Gastrocnemius medialis (tissue), 4 donors: ENCODE measurements at regions of chr7 and their contacts with region 1.

Region 1: DNA sequence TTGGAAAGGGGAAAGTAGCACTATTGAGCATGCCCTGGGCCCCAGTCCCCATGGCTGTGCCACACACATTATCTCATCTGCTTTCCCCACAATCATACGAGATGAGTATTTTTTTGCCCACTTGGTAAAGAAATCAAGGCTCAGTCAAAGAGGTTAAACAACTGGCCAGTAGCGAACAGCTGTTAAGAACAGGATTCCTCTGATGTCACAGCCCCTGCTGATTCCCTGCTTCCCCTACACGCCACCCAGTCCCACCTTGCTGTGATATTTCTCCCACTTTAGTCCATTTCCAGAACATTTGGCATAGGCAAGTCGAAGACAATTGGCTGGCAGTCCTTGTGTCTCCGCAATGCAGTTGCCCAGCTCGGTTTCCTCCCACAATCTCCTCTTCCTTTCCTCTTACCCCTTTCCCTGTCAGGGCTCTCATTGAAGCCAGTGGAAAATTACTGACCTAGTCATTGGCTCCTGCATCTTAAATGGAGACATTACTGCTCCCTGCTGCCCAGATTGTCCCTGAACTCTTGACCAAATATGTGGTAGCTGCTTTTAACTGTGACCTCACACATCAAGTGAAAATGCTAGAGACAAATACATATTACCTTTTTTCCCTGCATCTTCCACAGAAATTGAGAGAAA is 56.5 kb upstream of the EEPD1 start:
- DNase-seq: peak; percentile 41 to 42
- ATAC-seq: peak; percentile 89 to 96
- H3K4me3 ChIP-seq: no peak overlapping the region
- H3K27ac ChIP-seq: peak overlapping the region; percentile 30 to 75 (median 60)
- H3K4me1 ChIP-seq: peaks cover 6 to 20% of the 10 kb centered on the region in 2 donors
- H3K27me3 ChIP-seq: no peaks in the 10 kb centered on the region
- CTCF ChIP-seq: peak in 2 of 5 experiments; percentile 17 to 18
- POLR2A ChIP-seq: no peak

Region 2: DNA sequence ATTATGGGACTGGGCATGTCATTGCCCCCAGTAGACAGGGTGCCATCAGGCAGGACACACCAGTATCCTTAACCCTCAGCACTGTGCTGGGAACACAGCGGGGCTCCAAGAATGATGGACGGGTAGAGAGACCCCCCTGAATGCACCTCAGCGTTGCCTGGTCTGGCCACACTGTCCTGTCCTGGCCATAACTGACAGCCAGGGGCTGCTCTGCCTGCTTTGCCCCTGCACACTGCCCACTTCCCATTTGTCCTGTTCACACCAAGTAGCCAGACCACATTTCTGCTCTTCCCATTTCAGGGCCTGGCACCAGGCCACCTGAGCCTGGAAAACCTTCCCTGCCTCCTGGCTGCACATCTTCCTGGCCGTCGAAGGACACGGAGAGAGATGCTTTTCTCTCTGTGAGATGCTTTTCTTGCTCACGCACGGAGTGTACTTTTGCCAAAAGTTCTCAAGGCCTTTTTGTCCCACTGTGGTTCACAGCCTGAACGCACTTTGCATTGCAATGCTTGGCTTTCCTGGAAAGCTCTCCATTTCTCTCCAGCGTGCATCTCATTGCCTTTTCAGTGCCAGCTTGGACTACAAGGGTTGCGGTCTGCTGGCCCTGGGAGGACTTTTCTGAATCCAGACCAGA is 74.5 kb before region 1 on chr7:
- in situ Hi-C with region 1: no loop called
- intact Hi-C with region 1: loop called (anchors 2 kb)
- DNase-seq: peak in 1 of 2 donors; percentile 28
- ATAC-seq: peak; percentile 40 to 45
- H3K4me3 ChIP-seq: no peak overlapping the region
- H3K27ac ChIP-seq: peak overlapping the region in 1 of 4 donors; percentile 32
- H3K4me1 ChIP-seq: peaks cover 8 to 10% of the 10 kb centered on the region in 2 donors
- H3K27me3 ChIP-seq: no peaks in the 10 kb centered on the region
- CTCF ChIP-seq: no peak
- POLR2A ChIP-seq: no peak

Region 3: DNA sequence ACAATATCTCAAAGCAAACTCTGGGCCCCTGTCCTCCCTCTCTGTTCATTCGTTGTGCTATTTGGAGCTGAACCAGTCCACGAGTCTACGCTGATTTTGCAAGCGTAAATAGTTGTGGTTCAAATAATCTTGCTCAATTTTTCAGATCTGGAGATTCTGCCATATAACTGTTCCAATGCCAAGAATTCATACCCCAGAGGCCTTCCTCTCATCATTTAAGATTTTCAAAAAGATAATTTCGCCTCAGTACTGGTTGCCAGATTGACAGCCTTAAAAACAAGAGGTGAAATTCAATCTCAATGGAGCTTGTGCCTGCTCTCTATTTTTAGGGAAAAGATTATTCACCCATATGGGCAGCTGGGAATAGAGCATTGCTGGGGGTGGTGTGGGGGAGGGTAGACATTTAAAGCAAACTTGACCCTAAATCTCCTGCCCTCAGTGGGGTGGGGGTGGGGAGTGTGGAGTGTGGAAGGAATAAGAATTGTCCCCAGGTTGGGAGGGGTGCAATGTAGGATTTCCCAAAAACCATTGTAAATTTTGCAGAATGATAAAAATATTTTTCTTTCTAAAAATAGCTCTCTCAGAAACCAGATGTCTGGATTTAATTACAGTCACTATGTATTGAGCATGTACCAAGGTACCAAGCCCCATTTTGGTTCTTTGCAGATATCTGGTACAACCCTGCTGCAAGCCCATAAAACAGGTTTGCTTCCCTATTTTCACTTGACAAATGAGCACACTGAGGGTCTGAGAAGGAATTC is 48.3 kb before region 1 on chr7:
- in situ Hi-C with region 1: no loop called
- intact Hi-C with region 1: loop called (anchors 5 kb)
- DNase-seq: peak; percentile 71 to 84
- ATAC-seq: peak; percentile 90
- H3K4me3 ChIP-seq: no peak overlapping the region
- H3K27ac ChIP-seq: peak overlapping the region; percentile 90 to 94 (median 92)
- H3K4me1 ChIP-seq: peaks cover 59 to 87% of the 10 kb centered on the region in 2 donors
- H3K27me3 ChIP-seq: no peaks in the 10 kb centered on the region
- CTCF ChIP-seq: no peak
- POLR2A ChIP-seq: no peak

Region 4: DNA sequence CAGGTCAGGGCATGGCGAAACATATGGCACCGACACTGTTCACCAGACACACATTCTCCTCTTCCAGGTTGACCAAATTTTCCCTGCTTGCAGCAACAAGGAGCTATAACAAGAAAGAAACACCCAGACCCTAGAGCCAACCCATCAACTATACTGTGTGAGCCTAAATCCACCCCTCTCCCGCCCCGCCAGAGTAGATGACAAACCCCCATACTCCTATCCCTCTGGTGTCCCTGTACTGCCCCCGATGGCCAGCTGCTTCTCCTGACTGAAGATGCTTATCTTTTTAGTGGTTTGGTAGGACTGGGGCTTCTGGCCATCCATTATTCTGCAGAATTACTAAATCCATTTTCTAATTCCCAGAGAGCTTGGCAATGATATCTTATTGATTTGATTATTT is 13.7 kb before region 1 on chr7:
- in situ Hi-C with region 1: no loop called
- intact Hi-C with region 1: no loop called
- DNase-seq: no peak
- ATAC-seq: no peak
- H3K4me3 ChIP-seq: no peak overlapping the region
- H3K27ac ChIP-seq: no peak overlapping the region
- H3K4me1 ChIP-seq: peaks cover 8 to 14% of the 10 kb centered on the region in 2 donors
- H3K27me3 ChIP-seq: no peaks in the 10 kb centered on the region
- CTCF ChIP-seq: no peak
- POLR2A ChIP-seq: no peak

Region 5: DNA sequence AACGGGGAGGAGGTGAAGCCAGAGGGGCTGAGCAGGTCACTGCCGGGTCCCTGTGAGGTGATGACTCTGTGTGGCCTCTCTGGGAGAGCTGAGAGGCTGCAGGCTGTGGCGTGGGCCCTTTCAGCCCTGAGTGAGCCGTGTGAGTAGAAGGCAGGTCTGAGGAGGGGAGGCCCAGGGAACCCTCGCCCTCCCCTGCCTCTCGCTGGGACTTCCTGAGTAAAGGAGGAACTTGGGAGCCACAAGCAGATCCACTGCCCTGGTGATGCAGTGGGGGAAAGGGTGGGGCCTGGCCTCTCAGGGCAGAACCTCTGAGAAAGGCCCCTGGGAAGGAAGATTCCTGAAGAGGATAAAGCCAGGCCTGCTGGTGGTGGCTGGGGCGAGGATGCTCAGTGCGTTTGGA is 79.3 kb after region 1 on chr7:
- in situ Hi-C with region 1: no loop called
- intact Hi-C with region 1: no loop called
- DNase-seq: peak in 1 of 2 donors; percentile 43
- ATAC-seq: peak in 1 of 2 donors; percentile 28
- H3K4me3 ChIP-seq: no peak overlapping the region
- H3K27ac ChIP-seq: peak overlapping the region; percentile 18 to 64 (median 43)
- H3K4me1 ChIP-seq: peaks cover 49 to 60% of the 10 kb centered on the region in 2 donors
- H3K27me3 ChIP-seq: no peaks in the 10 kb centered on the region
- CTCF ChIP-seq: no peak
- POLR2A ChIP-seq: no peak